ENCODE measurements at regions of chr17 and their contacts with region 1.

Region 1: GRCh38 chr17:41801374-41802271 is 10.1 kb downstream of the P3H4 start:
- DNase-seq: peak; percentile 72
- H3K27ac ChIP-seq: peak overlapping the region; percentile 100
- CTCF ChIP-seq: peak; percentile 95

Region 2: DNA sequence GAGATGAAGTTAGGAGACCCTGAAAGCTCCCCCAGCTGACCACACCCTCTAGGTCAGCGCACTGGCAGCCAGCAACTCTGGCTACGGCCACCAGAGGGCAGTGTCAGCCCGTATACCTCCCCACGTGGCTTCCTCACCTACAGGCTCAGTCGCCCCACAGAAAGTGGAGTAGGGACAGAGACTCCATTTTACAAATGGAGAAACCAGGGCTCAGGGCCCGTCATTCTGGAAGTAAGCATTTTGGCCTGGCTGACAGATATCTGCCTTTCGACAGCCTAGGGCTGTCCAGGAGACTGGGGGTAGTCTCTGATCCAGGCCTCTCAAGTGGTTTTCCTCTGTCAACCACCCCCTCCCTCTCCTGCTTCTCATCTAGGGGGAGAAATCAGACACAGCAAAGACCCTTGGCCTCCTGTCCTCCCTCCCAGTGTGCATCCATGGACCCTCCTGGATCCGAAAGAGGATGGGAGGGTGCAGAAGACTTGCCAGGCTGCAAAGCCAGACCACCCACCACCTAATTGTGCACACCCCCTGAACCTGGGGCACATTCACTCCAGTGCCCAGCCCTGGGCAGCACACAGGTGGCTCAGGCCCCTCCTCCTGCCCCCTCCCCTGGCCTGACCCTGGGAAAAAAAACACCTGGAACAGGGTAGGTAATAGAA is 63.4 kb before region 1 on chr17:
- CTCF ChIA-PET with region 1: interaction called, 14 read pairs
- POLR2A ChIA-PET with region 1: no interaction called
- DNase-seq: peak; percentile 85
- H3K27ac ChIP-seq: peak overlapping the region; percentile 64
- CTCF ChIP-seq: peak; percentile 95

Region 3: DNA sequence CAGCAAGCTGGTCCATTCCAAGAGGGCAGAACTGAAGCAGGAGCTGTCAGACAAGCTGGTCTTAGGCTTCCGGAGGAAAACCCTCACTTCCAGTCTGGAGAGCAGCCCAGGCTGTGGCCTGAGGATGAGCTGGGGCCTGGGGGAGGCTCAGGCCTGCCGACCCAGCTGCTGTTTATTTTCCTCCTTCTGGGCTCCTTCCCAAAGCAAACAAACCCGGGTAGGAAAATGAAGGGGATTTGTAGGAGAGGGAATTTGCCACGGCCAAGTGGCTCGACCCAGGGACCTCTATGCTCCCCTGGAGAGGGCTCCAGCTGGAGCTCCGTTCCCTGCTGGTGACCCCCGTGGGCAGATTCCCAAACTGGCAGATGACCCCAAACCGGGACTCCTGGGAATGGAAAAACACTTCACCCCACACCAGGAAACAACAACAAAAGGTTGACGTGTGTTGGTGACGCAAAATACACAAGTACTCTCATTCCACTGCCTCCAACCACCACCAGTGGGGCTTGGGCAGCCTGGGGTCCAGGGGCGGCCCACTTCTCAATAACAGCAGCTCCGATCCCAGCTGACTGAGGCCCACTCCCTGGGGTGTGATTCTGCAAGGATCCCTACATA is 23.9 kb before region 1 on chr17:
- CTCF ChIA-PET with region 1: interaction called, 14 read pairs
- POLR2A ChIA-PET with region 1: interaction called, 5 read pairs
- DNase-seq: peak; percentile 58
- H3K27ac ChIP-seq: peak overlapping the region; percentile 97
- CTCF ChIP-seq: no peak

Region 4: GRCh38 chr17:41786227-41787020 is 15.2 kb before region 1 on chr17 and contains the start of gene JUP:
- CTCF ChIA-PET with region 1: interaction called, 51 read pairs
- POLR2A ChIA-PET with region 1: interaction called, 90 read pairs
- DNase-seq: peak; percentile 99
- H3K27ac ChIP-seq: peak within 1 kb of the TSS; percentile 100
- CTCF ChIP-seq: peak; percentile 76

Region 5: GRCh38 chr17:41814195-41814594 is 12.6 kb after region 1 on chr17:
- CTCF ChIA-PET with region 1: interaction called, 10 read pairs
- POLR2A ChIA-PET with region 1: interaction called, 3 read pairs
- DNase-seq: no peak
- H3K27ac ChIP-seq: peak overlapping the region; percentile 91
- CTCF ChIP-seq: no peak

Measured in RWPE1 (cell line).